PC-9 (cell line): ENCODE measurements at regions of chr2 and their contacts with region 1.

Region 1: DNA sequence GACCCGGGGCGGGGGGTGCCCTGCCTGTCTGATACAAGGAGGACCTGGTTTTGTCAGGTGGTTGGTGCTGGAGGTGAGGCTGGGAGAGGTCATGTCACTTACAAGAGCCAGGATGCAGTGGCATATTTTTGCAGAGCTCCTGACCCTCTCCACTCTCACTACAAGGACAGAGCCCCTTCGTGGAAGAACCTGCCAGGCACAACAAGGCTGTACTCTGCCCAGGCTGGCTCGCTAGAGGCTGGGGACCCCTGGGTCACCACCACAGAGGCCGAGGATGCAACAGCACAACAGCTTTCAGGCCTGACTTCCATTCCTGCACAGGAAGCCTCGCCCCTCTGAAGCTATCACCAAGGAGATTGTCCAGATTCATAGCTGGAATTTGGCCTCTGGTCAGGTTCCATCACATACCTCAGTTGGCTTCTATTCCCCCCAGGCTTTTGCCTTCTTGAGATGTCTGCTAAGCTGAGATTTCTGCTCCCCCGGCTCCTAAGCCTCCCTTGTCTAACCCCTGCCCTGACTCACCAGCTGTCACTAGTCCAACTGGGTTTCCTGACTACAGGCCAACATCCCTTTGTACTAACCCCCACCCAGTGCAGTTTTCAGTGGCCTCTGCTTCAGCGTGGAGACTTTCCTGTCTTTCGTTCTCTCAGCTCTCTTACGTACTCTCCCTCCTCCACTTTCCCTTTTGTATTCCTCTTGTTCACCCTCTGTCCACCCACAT is 132.5 kb upstream of the EPAS1 start:
- DNase-seq: peak; percentile 93 to 99
- H3K4me3 ChIP-seq: peak overlapping the region; percentile 36; the same call in 1 of the 2 replicates
- H3K27ac ChIP-seq: peak overlapping the region; percentile 96
- H3K4me1 ChIP-seq: peaks cover 74% of the 10 kb centered on the region
- H3K27me3 ChIP-seq: no peaks in the 10 kb centered on the region
- CTCF ChIP-seq: 0 out of 2 replicates have a peak, but pooled peaks have one; percentile 13

Region 2: DNA sequence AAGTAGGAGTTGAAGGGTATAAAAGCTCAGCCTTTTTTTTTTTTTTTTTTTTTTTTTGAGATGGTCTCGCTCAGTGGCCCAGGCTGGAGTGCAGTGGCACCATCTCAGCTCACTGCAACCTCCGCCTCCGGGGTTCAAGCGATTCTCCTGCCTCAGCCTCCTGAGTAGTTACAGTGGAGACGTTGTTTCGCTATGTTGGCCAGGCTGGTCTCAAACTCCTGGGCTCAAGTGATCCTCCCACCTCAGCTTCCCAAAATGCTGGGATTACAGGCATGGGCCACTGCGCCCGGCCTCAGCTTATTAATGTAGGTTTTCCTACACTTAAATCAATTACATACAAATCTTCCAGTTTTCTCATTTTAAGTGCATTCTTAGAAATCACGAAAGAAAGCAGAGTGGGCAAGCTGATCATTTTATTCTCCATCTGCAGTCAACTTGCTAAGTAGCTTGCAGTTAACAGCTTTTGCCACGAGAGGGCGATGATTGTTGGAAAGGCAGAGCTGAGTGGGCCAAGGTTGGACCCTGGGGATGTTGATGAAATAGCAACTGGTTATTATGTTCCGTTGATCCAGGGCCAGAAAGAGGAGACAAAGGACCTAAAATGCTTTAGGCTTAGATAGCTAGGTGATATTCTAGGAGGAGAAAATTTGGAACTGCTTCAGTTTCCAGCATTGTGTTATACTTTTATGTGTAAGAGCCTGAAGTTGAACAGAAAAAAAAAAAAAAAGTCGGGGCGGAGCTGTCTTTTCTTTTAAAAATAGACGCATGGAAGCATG is 101.9 kb before region 1 on chr2:
- CTCF ChIA-PET with region 1: interaction called, 17 read pairs
- POLR2A ChIA-PET with region 1: interaction called, 3 read pairs
- intact Hi-C with region 1: loop called (anchors 1 kb)
- DNase-seq: peak; percentile 65 to 76
- H3K4me3 ChIP-seq: no peak overlapping the region
- H3K27ac ChIP-seq: no peak overlapping the region
- H3K4me1 ChIP-seq: peaks cover 40% of the 10 kb centered on the region
- H3K27me3 ChIP-seq: no peaks in the 10 kb centered on the region
- CTCF ChIP-seq: peak; percentile 99

Region 3: DNA sequence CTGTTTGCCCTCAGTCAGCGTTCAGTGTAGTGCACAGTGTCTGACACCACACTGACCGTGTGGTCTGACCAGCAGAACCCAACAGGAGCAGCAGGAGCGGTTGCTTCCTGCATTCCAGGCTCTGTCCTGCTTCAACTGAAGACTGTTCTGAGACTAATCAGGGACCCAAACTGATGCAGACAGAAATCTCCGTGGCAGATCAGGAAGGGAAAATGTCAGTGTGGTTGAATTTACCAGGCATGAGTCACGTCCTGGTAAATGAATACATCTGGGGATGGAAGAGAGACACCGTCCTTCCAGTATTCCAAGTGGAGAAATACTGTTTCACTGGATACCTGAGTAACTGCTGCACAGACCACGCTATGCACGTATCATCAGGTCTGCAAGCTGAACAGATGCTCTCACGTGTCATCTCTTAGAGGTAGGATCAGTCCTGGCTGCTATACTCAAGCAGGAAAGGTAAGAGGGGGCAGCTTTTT is 91.2 kb before region 1 on chr2:
- CTCF ChIA-PET with region 1: interaction called, 3 read pairs
- POLR2A ChIA-PET with region 1: no interaction called
- intact Hi-C with region 1: loop called (anchors 1 kb)
- DNase-seq: peak; percentile 79 to 99
- H3K4me3 ChIP-seq: peak overlapping the region; percentile 30; the same call in 1 of the 2 replicates
- H3K27ac ChIP-seq: peak overlapping the region; percentile 90
- H3K4me1 ChIP-seq: peaks cover 54% of the 10 kb centered on the region
- H3K27me3 ChIP-seq: no peaks in the 10 kb centered on the region
- CTCF ChIP-seq: no peak

Region 4: GRCh38 chr2:46117379-46117778 is 47.4 kb before region 1 on chr2:
- CTCF ChIA-PET with region 1: no interaction called
- POLR2A ChIA-PET with region 1: no interaction called
- intact Hi-C with region 1: loop called (anchors 2 kb)
- DNase-seq: peak; percentile 38 to 75
- H3K4me3 ChIP-seq: no peak overlapping the region
- H3K27ac ChIP-seq: peak overlapping the region; percentile 67
- H3K4me1 ChIP-seq: peaks cover 49% of the 10 kb centered on the region
- H3K27me3 ChIP-seq: no peaks in the 10 kb centered on the region
- CTCF ChIP-seq: no peak

Region 5: GRCh38 chr2:46151577-46151976 is 13.2 kb before region 1 on chr2:
- CTCF ChIA-PET with region 1: no interaction called
- POLR2A ChIA-PET with region 1: no interaction called
- intact Hi-C with region 1: no loop called
- DNase-seq: no peak
- H3K4me3 ChIP-seq: no peak overlapping the region
- H3K27ac ChIP-seq: no peak overlapping the region
- H3K4me1 ChIP-seq: peaks cover 18% of the 10 kb centered on the region
- H3K27me3 ChIP-seq: no peaks in the 10 kb centered on the region
- CTCF ChIP-seq: no peak

Region 6: GRCh38 chr2:46229134-46230063 is 64.7 kb after region 1 on chr2:
- CTCF ChIA-PET with region 1: no interaction called
- POLR2A ChIA-PET with region 1: interaction called, 3 read pairs
- intact Hi-C with region 1: loop called (anchors 1 kb)
- DNase-seq: no peak
- H3K4me3 ChIP-seq: no peak overlapping the region
- H3K27ac ChIP-seq: no peak overlapping the region
- H3K4me1 ChIP-seq: peaks cover 33% of the 10 kb centered on the region
- H3K27me3 ChIP-seq: no peaks in the 10 kb centered on the region
- CTCF ChIP-seq: no peak

Region 7: DNA sequence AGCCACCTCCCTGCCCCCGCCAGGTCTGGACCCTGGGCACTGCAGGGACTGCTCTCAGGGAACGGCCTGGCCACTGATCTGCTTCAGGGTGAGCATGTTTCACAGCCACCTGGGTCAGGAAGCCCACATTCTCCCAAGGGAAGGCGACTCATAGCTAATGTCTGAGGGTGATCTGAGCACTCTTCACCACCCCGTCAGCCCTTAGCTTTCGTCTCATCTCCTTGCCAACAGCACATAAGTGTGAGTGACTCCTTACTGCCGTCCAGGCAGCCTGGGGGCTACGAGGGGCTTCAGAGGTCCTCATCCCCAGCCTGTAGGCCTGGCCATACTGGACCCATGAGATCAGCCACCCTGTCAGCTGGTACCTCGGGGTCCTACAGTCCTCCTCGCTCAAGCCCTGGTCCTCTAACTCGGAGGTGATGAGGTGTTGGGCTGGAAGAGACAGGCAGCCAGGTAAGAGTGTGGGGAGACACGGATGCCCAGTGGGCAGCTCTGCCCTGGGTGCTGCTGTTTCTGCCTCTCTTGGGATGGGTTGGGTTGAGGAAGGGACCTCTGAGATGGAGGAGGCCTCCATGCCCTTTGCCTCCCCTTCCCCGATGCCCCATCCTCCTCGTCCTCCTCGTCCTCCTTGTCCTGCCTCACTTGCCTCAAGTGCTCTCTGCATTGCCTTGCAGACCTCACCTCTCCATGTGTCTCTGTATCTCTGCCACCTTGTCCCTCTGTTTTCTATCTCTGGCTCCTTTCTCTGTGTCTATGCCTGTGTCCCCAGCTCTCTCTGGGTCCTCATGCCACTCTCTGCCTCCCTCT is 663.1 kb after region 1 on chr2:
- CTCF ChIA-PET with region 1: no interaction called
- POLR2A ChIA-PET with region 1: no interaction called
- intact Hi-C with region 1: no loop called
- DNase-seq: no peak
- H3K4me3 ChIP-seq: no peak overlapping the region
- H3K27ac ChIP-seq: no peak overlapping the region
- H3K4me1 ChIP-seq: no peaks in the 10 kb centered on the region
- H3K27me3 ChIP-seq: no peaks in the 10 kb centered on the region
- CTCF ChIP-seq: no peak